Right lobe of liver (tissue), 6 donors: ENCODE measurements at regions of chr7 and their contacts with region 1.

Region 1: GRCh38 chr7:54778696-54779540 is 19.9 kb upstream of the SEC61G start:
- DNase-seq: no peak
- ATAC-seq: no peak
- H3K4me3 ChIP-seq: no peak overlapping the region
- H3K27ac ChIP-seq: no peak overlapping the region
- H3K4me1 ChIP-seq: no peaks in the 10 kb centered on the region
- H3K27me3 ChIP-seq: no peaks in the 10 kb centered on the region
- CTCF ChIP-seq: no peak
- POLR2A ChIP-seq: no peak

Region 2: DNA sequence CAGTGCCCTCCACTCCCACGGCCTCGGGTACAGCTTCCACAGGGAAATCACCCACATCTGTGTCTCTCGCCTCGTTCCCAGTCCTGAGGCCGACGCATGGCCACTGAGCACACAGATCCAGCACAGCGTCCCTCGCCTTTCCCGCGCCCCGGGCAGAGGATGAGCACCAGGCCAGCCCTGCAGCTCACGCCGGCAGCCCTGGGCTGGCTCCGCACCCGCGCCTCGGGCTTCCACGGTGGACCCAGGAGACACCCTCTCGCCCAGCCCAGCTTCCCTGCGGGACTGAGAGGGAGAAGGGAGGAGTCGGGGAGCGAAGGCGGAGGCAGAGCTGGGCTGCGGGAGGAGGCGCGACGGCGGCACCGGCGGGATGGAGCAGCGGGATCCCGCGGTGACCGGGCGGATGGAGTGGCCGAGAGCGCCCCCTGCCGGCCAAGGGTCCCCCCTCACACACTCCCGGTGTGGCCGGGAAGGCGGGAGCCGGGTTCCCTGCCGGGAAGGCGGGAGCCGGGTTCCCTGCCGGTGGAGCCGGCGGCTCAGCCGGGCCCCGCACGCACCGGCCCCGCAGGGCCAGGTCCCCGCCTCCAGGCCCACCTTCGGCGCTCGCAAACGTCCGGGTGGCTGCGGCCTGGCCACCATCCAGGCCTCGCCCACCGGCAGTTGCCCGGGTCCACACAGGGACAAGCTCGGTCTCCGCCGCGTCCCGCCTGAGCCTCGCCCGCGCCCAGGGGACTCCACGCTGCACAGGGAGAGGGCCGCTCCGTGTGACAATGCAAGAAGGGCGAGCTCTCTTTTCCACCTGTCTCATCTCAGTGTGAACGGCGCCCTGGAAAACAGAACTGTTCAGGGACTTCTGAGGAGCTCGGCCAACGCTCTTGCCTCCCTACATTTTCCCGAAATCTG is 475.9 kb after region 1 on chr7:
- intact Hi-C with region 1: loop called in 1 of 2 experiments (anchors 5 kb)
- DNase-seq: peak; percentile 88 to 90 (median 88)
- ATAC-seq: peak; percentile 89 to 95 (median 92)
- H3K4me3 ChIP-seq: peak overlapping the region; percentile 68 to 71 (median 68)
- H3K27ac ChIP-seq: peak overlapping the region in 2 of 3 donors; percentile 0 to 44
- H3K4me1 ChIP-seq: peaks cover 0 to 10% (median 3%) of the 10 kb centered on the region in 4 donors
- H3K27me3 ChIP-seq: no peaks in the 10 kb centered on the region
- CTCF ChIP-seq: peak; percentile 91 to 96 (median 94)
- POLR2A ChIP-seq: no peak